Mammary epithelial cell (primary cell): ENCODE measurements at regions of chr20 and their contacts with region 1.

Region 1: DNA sequence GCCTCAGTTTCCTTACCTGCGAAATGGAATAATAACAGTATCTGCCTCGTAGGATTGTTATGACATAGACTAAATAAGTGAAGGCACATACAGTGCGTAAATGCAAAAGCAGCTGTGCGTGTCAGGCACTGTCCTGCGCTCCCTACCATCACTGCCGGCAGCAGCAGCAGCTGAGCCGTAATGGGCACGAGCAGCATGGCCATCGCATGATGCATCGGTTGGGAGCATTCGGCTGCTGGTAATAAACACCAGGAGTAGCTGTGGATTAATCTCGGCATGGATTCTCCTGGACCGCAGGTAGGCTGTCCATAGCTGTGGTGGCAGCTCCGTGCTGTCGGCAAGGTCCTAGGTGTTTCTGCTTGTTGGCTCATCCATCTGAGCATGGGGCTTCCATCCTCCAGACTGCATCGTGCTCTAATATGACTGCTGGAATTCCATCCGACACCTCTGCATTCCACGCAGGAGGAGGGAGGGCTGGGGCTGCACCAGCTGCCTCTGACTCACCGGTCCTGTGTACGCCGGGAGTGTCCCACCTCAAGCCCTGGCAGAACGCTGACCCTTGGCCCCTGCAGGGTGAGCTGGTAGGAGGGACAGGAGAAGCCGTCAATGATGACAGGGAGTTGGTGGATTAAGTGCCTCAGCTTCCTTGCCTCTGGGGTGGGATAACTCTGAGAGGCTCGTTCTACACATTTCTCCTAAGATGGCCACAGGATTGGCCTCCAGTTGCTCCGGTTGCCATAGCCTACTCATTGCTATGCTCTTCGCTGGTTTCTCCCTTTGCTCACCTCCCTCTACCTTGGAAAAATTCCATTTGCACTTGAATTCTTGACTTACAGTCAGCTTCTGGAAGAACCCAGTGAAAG is 100.9 kb upstream of the PMEPA1 start:
- DNase-seq: peak; percentile 73
- H3K4me3 ChIP-seq: no peak overlapping the region
- H3K27ac ChIP-seq: no peak overlapping the region
- H3K4me1 ChIP-seq: peaks cover 19% of the 10 kb centered on the region
- H3K27me3 ChIP-seq: no peaks in the 10 kb centered on the region
- CTCF ChIP-seq: no peak

Region 2: DNA sequence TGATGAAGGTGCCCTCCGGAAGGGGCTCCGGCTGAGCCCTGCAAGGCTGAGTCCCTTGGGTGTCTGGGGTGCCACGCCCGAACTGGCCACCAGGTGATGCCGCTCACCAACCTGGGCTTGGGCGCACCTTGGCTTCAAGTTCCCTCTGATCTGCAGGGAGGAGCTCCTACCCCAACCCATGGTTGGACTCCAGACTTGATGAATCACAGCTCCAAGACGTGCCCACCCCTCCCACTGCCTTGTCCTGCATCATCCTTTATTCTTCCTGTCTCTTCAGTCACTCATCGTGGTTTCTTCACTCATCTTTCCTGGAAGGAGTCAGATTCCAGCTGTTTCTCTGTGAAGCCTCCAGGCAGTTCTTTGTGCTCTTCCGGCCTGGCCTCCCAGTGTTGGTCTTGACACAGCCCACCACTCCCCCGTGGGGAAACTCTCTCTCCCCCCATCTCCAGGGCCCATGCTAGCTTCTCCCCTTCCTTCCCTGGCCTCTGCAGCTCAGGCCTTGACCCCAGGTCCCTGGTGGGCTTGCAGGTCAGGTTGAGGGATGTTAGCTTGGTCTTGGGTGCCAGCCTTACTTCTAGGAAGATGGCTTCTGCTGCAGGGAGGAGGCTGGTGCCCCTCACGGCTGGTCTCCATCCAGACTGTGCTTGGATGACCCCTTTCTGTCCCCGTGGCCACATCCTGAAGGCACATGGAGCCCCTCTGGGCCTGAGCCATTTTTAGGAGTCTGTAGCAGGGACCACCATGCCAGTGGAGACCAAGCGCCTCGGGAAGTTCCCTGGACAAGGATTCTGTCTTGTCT is 188.0 kb before region 1 on chr20:
- CTCF ChIA-PET with region 1: no interaction called
- dilution Hi-C with region 1: no loop called
- in situ Hi-C with region 1: no loop called
- intact Hi-C with region 1: loop called (anchors 10 kb)
- DNase-seq: peak; percentile 91
- H3K4me3 ChIP-seq: no peak overlapping the region
- H3K27ac ChIP-seq: no peak overlapping the region
- H3K4me1 ChIP-seq: peaks cover 22% of the 10 kb centered on the region
- H3K27me3 ChIP-seq: no peaks in the 10 kb centered on the region
- CTCF ChIP-seq: peak; percentile 99 to 100

Region 3: GRCh38 chr20:57682184-57683101 is 128.3 kb before region 1 on chr20:
- CTCF ChIA-PET with region 1: no interaction called
- dilution Hi-C with region 1: no loop called
- in situ Hi-C with region 1: no loop called
- intact Hi-C with region 1: no loop called
- DNase-seq: no peak
- H3K4me3 ChIP-seq: no peak overlapping the region
- H3K27ac ChIP-seq: no peak overlapping the region
- H3K4me1 ChIP-seq: peaks cover 21% of the 10 kb centered on the region
- H3K27me3 ChIP-seq: no peaks in the 10 kb centered on the region
- CTCF ChIP-seq: no peak

Region 4: DNA sequence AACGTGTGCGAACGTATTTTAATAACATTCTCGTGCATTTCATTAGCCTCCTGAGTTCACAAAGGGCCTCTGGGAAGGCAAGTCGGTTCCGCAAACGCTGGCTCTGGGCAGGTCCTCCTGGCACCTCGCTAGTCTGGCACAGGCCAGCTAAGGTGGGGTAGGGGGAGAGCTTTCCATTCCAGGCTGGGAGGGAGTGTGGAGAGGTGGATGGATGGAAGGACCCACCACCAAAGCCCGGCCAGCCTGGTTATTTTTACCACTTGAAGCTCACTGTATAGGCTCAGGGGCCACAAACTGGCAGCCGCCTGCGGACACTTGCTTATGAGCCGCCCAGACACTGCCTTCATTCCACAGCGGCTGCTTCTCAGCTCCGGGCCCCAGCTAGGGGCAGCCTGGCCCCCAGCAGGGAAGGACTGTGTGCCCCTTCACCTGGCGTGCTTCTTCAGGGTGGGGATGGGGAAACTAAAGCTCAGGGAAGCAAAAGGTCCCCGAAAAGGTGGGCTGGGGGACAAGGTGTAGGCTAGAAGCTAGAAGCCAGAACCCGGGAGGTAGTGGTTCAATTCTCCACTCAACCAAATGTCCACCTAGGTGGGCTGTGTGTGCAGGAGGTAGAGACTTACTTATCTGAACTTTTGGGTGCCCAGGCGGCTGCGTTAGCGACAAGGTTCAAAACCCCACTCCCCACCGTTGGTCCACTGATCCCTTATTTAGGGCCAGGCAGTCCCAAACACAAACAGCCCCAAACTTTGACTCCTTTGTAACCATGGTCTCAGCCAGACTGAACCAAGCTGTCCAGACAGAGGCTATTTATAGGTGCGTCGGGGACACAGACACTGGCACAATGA is 102.7 kb before region 1 on chr20:
- CTCF ChIA-PET with region 1: no interaction called
- dilution Hi-C with region 1: no loop called
- in situ Hi-C with region 1: no loop called
- intact Hi-C with region 1: no loop called
- DNase-seq: no peak
- H3K4me3 ChIP-seq: peak overlapping the region; percentile 85 to 94 (median 92)
- H3K27ac ChIP-seq: peak overlapping the region; percentile 67
- H3K4me1 ChIP-seq: peaks cover 45% of the 10 kb centered on the region
- H3K27me3 ChIP-seq: no peaks in the 10 kb centered on the region
- CTCF ChIP-seq: no peak

Region 5: GRCh38 chr20:57718490-57719271 is 92.1 kb before region 1 on chr20:
- CTCF ChIA-PET with region 1: no interaction called
- dilution Hi-C with region 1: no loop called
- in situ Hi-C with region 1: no loop called
- intact Hi-C with region 1: loop called (anchors 2 kb)
- DNase-seq: peak; percentile 97
- H3K4me3 ChIP-seq: peak overlapping the region; percentile 41 to 56 (median 49)
- H3K27ac ChIP-seq: no peak overlapping the region
- H3K4me1 ChIP-seq: peaks cover 45% of the 10 kb centered on the region
- H3K27me3 ChIP-seq: no peaks in the 10 kb centered on the region
- CTCF ChIP-seq: no peak

Region 6: GRCh38 chr20:58065508-58066361 is 255.0 kb after region 1 on chr20:
- CTCF ChIA-PET with region 1: no interaction called
- dilution Hi-C with region 1: no loop called
- in situ Hi-C with region 1: no loop called
- intact Hi-C with region 1: loop called (anchors 10 kb)
- DNase-seq: peak; percentile 90
- H3K4me3 ChIP-seq: no peak overlapping the region
- H3K27ac ChIP-seq: peak overlapping the region; percentile 53
- H3K4me1 ChIP-seq: peaks cover 22% of the 10 kb centered on the region
- H3K27me3 ChIP-seq: no peaks in the 10 kb centered on the region
- CTCF ChIP-seq: no peak